Heart right ventricle (tissue), 16 donors: ENCODE measurements at regions of chr6 and their contacts with region 1.

Region 1: GRCh38 chr6:38871741-38872568 is 156.8 kb downstream of the DNAH8 start:
- DNase-seq: peak in 1 of 2 donors; percentile 17
- ATAC-seq: no peak
- H3K4me3 ChIP-seq: no peak overlapping the region
- H3K27ac ChIP-seq: no peak overlapping the region
- H3K4me1 ChIP-seq: peaks cover 0 to 9% (median 0%) of the 10 kb centered on the region in 9 donors
- H3K27me3 ChIP-seq: peaks cover 0 to 42% (median 6%) of the 10 kb centered on the region in 7 donors
- CTCF ChIP-seq: peak; percentile 57 to 90 (median 76)

Region 2: DNA sequence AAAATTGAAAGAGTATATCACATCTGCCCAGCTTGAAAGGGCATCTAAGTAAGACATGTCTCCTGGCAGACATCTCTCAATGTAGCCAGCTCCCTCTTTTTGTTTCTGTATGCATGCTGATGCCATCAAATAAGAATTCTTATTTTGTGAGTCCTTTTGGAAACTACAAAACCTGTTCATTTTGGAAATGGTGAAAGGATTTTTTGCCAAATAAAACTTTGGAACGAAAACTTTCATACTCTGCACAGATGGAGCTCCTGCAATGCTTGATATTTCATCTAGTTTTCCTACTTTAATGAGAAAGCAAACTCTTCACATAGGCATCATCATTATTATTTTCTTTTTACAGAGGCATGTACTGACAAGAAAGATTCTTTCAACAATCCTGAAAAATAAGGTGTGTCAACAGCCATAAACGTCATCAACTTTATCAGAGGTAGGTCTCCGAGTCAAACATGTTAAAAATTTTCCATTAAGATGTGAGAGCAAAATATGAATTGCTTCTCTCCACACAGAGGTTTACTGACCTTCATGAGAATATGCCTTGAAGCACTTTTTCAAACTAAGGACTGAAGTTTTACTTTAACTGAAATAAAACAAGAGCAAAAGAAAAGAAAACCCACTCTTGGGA is 1465.1 kb before region 1 on chr6:
- intact Hi-C with region 1: no loop called
- DNase-seq: no peak
- ATAC-seq: no peak
- H3K4me3 ChIP-seq: no peak overlapping the region
- H3K27ac ChIP-seq: no peak overlapping the region
- H3K4me1 ChIP-seq: peaks cover 0 to 4% (median 0%) of the 10 kb centered on the region in 9 donors
- H3K27me3 ChIP-seq: no peaks in the 10 kb centered on the region
- CTCF ChIP-seq: no peak

Region 3: DNA sequence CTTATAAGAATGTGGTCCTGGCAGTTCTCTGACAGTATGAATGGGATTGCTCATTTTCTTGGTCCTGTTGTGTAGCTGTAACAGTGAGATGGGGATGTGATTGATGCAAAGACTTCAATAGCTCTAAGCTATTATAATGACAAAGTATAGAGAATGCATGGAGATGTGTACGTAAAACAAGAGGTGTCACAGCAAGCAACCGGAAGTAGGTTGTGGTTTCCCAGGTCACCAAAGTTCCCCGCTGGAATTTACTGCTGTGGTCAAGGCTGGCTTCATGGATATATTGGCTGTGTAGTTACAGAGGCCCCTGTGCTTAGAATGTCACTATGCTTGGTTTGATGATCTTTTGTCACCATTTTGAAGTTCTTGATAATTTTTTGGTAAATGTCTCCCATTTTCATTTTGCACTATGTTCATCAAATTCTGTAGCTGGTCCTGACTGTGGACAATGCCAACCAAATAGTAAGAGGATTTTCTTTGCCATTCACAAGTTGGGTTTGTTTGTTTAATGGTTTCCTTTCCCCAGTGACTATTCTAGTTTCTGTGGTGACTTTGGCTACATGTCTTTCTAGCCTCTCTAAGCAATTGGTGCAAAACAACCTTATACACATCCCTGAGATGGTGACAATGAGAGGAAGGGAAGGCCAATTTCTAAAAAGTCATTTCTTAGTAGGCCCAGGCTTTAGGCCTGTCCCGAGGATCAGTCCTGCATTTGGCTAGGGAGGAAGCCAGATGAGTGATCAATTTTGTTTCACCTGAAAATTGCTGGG is 146.4 kb before region 1 on chr6:
- intact Hi-C with region 1: no loop called
- DNase-seq: no peak
- ATAC-seq: no peak
- H3K4me3 ChIP-seq: no peak overlapping the region
- H3K27ac ChIP-seq: no peak overlapping the region
- H3K4me1 ChIP-seq: no peaks in the 10 kb centered on the region
- H3K27me3 ChIP-seq: peaks cover 0 to 3% (median 0%) of the 10 kb centered on the region in 7 donors
- CTCF ChIP-seq: no peak

Region 4: DNA sequence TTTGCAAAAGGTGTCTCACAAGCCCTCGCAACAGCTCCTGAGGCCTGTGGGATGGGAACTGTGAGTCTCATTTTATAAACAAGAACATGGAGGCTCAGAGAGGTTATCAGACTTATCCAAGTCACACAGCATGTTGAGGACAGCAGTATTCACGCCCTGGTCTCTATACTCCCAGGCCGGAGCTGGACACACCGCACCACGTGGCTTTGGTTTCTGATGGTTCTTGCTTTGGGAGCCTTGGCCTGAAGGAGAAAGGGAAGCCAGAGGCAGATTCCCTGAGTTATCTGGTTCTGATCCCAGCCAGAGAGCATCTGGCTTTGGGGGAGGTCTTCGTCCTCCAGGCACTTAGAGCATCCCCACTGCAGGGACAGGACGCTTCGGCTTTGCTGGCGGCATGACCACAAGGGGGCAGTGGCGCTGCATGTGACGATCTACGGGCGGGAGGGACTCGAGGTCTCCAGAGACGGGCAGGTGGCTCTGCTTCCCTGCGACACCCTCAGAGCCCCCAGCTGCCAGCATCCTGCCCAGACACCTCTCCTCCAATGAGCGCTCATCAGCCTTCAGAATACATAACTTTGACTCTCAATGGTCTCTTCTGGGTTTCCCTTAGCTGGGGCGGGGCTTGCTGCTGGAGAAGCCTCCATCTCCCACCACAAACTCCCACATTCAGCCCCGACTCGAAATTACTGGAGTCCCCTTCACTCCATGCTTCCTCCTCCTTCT is 294.4 kb after region 1 on chr6:
- intact Hi-C with region 1: loop called in 1 of 10 experiments (anchors 5 kb)
- DNase-seq: peak; percentile 58 to 81
- ATAC-seq: peak; percentile 58 to 87 (median 76)
- H3K4me3 ChIP-seq: no peak overlapping the region
- H3K27ac ChIP-seq: no peak overlapping the region
- H3K4me1 ChIP-seq: peaks cover 0 to 4% (median 0%) of the 10 kb centered on the region in 9 donors
- H3K27me3 ChIP-seq: peaks cover 0 to 29% (median 10%) of the 10 kb centered on the region in 7 donors
- CTCF ChIP-seq: peak; percentile 53 to 95 (median 86)

Region 5: GRCh38 chr6:39309942-39310531 is 438.1 kb after region 1 on chr6:
- intact Hi-C with region 1: loop called in 7 of 10 experiments (anchors 2 to 5 kb)
- DNase-seq: peak; percentile 53 to 71
- ATAC-seq: peak; percentile 66 to 80 (median 75)
- H3K4me3 ChIP-seq: no peak overlapping the region
- H3K27ac ChIP-seq: no peak overlapping the region
- H3K4me1 ChIP-seq: peaks cover 4 to 17% (median 15%) of the 10 kb centered on the region in 9 donors
- H3K27me3 ChIP-seq: peaks cover 0 to 54% (median 41%) of the 10 kb centered on the region in 7 donors
- CTCF ChIP-seq: peak; percentile 70 to 90 (median 86)